Activated naive CD4-positive, alpha-beta T cell treated with anti-CD3 and anti-CD28 coated beads for 36 hours (primary cell): ENCODE measurements at regions of chr10 and their contacts with region 1.

Region 1: DNA sequence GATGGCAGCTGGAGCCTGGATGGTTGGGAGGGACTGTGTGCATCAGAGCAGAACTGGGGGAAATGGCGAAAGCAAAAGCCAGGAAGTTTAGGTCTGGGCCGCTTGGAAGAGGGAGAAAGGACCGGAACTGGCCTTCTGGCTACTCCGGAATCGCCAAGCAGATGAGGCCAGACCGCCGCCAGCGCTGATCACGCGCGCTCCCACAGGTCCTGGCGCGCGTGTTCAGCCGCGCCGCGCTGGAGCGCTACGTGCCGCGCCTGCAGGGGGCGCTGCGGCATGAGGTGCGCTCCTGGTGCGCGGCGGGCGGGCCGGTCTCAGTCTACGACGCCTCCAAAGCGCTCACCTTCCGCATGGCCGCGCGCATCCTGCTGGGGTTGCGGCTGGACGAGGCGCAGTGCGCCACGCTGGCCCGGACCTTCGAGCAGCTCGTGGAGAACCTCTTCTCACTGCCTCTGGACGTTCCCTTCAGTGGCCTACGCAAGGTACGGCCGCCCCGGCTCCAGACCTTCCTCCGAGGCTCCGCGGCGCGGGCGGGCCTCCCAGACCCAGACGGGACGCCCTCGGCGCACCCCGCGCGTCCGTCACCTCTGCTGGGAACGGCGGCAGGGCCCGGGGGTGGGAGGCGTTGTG is 2.0 kb downstream of the CYP26C1 start:
- DNase-seq: peak; percentile 64
- H3K4me3 Mint-ChIP-seq: peak overlapping the region; percentile 66
- H3K27ac Mint-ChIP-seq: no peak overlapping the region
- H3K4me1 Mint-ChIP-seq: peaks cover 22% of the 10 kb centered on the region
- H3K27me3 Mint-ChIP-seq: peaks cover 55% of the 10 kb centered on the region

Region 2: GRCh38 chr10:92689663-92690210 is 372.9 kb before region 1 on chr10 and contains the start of gene HHEX:
- CTCF ChIA-PET with region 1: no interaction called
- intact Hi-C with region 1: loop called (anchors 10 kb)
- DNase-seq: no peak
- H3K4me3 Mint-ChIP-seq: peak within 1 kb of the TSS; percentile 58
- H3K27ac Mint-ChIP-seq: no peak within 1 kb of the TSS
- H3K4me1 Mint-ChIP-seq: peaks cover 19% of the 10 kb centered on the region
- H3K27me3 Mint-ChIP-seq: peaks cover 64% of the 10 kb centered on the region
- total RNA-seq, gene HHEX: 0.15 TPM in 1 of 2 experiments, not detected in the other

Region 3: GRCh38 chr10:93006435-93007039 is 56.1 kb before region 1 on chr10:
- CTCF ChIA-PET with region 1: interaction called, 4 read pairs
- intact Hi-C with region 1: loop called (anchors 2 kb)
- DNase-seq: no peak
- H3K4me3 Mint-ChIP-seq: no peak overlapping the region
- H3K27ac Mint-ChIP-seq: no peak overlapping the region
- H3K4me1 Mint-ChIP-seq: no peaks in the 10 kb centered on the region
- H3K27me3 Mint-ChIP-seq: no peaks in the 10 kb centered on the region

Region 4: DNA sequence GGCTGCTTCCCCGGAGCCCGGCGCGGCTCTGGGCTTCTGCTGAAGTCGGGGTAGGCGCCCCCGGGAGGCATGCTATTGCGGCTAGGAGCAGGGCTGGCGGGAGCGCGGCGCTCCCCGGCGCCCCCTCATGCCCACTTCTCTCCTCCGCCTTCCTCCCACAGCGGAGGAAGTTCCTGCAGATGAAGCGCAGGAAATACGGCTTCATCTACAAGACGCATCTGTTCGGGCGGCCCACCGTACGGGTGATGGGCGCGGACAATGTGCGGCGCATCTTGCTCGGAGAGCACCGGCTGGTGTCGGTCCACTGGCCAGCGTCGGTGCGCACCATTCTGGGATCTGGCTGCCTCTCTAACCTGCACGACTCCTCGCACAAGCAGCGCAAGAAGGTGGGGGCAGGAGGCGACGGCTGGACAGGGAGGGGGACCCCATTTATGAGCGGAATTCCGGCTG is 11.5 kb after region 1 on chr10:
- CTCF ChIA-PET with region 1: interaction called, 4 read pairs
- intact Hi-C with region 1: loop called (anchors 1 kb)
- DNase-seq: no peak
- H3K4me3 Mint-ChIP-seq: peak overlapping the region; percentile 62
- H3K27ac Mint-ChIP-seq: no peak overlapping the region
- H3K4me1 Mint-ChIP-seq: peaks cover 31% of the 10 kb centered on the region
- H3K27me3 Mint-ChIP-seq: peaks cover 69% of the 10 kb centered on the region

Region 5: GRCh38 chr10:93097386-93097785 is 34.8 kb after region 1 on chr10:
- CTCF ChIA-PET with region 1: no interaction called
- intact Hi-C with region 1: no loop called
- DNase-seq: no peak
- H3K4me3 Mint-ChIP-seq: no peak overlapping the region
- H3K27ac Mint-ChIP-seq: no peak overlapping the region
- H3K4me1 Mint-ChIP-seq: no peaks in the 10 kb centered on the region
- H3K27me3 Mint-ChIP-seq: no peaks in the 10 kb centered on the region

Region 6: DNA sequence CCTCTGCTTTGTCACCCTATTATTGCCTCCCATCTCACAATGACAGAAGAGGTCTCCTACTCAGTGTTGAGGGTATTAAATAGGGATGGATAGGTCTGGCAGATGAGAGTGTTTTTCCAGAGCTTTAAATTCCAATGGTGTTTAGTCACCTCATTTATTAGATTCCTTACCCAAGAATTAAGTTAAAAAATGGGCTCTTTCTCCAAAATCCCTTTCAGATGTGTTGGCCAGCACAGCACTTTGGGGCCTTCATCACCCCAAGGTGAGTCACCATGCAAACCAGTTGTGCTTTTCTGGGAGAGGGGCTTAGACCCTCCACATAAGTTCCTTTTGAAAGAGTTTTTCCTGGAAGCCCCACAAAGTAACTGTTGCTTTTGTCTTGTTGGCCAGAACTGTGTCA is 89.5 kb after region 1 on chr10:
- CTCF ChIA-PET with region 1: no interaction called
- intact Hi-C with region 1: no loop called
- DNase-seq: no peak
- H3K4me3 Mint-ChIP-seq: no peak overlapping the region
- H3K27ac Mint-ChIP-seq: no peak overlapping the region
- H3K4me1 Mint-ChIP-seq: peaks cover 21% of the 10 kb centered on the region
- H3K27me3 Mint-ChIP-seq: peaks cover 8% of the 10 kb centered on the region

Region 7: GRCh38 chr10:93267521-93267920 is 204.9 kb after region 1 on chr10:
- CTCF ChIA-PET with region 1: no interaction called
- intact Hi-C with region 1: no loop called
- DNase-seq: no peak
- H3K4me3 Mint-ChIP-seq: no peak overlapping the region
- H3K27ac Mint-ChIP-seq: no peak overlapping the region
- H3K4me1 Mint-ChIP-seq: no peaks in the 10 kb centered on the region
- H3K27me3 Mint-ChIP-seq: no peaks in the 10 kb centered on the region